ENCODE measurements at regions of chr20 and their contacts with region 1.

Region 1: GRCh38 chr20:38434743-38435554 is at the start of gene SNHG17:
- DNase-seq: peak; percentile 35 to 98
- ATAC-seq: peak; percentile 87 to 89
- H3K4me3 ChIP-seq: peak within 1 kb of the TSS; percentile 95
- H3K27ac ChIP-seq: peak within 1 kb of the TSS; percentile 97
- H3K4me1 ChIP-seq: peaks cover 15% of the 10 kb centered on the region; the same call in 2 of the 3 replicates
- CTCF ChIP-seq: peak; percentile 97
- EP300 ChIP-seq: no peak
- POLR2A ChIP-seq: peak; percentile 99
- RAD21 ChIP-seq: peak; percentile 34 to 47; a peak in 4 of 5 replicates
- polyA plus RNA-seq, gene SNHG17: 154 and 159 TPM in 2 replicates

Region 2: GRCh38 chr20:38278763-38279162 is 156.2 kb before region 1 on chr20:
- CTCF ChIA-PET with region 1: no interaction called
- POLR2A ChIA-PET with region 1: no interaction called
- DNase-seq: no peak
- ATAC-seq: no peak
- H3K4me3 ChIP-seq: no peak overlapping the region
- H3K27ac ChIP-seq: no peak overlapping the region
- H3K4me1 ChIP-seq: no peaks in the 10 kb centered on the region
- CTCF ChIP-seq: no peak
- EP300 ChIP-seq: no peak
- POLR2A ChIP-seq: no peak
- RAD21 ChIP-seq: no peak

Region 3: GRCh38 chr20:38304845-38305447 is 130.0 kb before region 1 on chr20:
- CTCF ChIA-PET with region 1: no interaction called
- POLR2A ChIA-PET with region 1: interaction called, 11 read pairs
- DNase-seq: peak; percentile 43 to 50
- ATAC-seq: peak; percentile 68 to 85; a peak in 4 of 6 replicates
- H3K4me3 ChIP-seq: no peak overlapping the region
- H3K27ac ChIP-seq: no peak overlapping the region
- H3K4me1 ChIP-seq: no peaks in the 10 kb centered on the region
- CTCF ChIP-seq: peak; percentile 39
- EP300 ChIP-seq: no peak
- POLR2A ChIP-seq: no peak
- RAD21 ChIP-seq: peak in 1 of 2 experiments; percentile 44; a peak in 4 of 5 replicates

Region 4: GRCh38 chr20:38337561-38338140 is 97.3 kb before region 1 on chr20:
- CTCF ChIA-PET with region 1: no interaction called
- POLR2A ChIA-PET with region 1: no interaction called
- DNase-seq: peak; percentile 58 to 84
- ATAC-seq: peak; percentile 63 to 95; a peak in 5 of 6 replicates
- H3K4me3 ChIP-seq: no peak overlapping the region
- H3K27ac ChIP-seq: no peak overlapping the region
- H3K4me1 ChIP-seq: no peaks in the 10 kb centered on the region
- CTCF ChIP-seq: peak; percentile 45
- EP300 ChIP-seq: no peak
- POLR2A ChIP-seq: no peak
- RAD21 ChIP-seq: peak; percentile 43 to 78

Region 5: DNA sequence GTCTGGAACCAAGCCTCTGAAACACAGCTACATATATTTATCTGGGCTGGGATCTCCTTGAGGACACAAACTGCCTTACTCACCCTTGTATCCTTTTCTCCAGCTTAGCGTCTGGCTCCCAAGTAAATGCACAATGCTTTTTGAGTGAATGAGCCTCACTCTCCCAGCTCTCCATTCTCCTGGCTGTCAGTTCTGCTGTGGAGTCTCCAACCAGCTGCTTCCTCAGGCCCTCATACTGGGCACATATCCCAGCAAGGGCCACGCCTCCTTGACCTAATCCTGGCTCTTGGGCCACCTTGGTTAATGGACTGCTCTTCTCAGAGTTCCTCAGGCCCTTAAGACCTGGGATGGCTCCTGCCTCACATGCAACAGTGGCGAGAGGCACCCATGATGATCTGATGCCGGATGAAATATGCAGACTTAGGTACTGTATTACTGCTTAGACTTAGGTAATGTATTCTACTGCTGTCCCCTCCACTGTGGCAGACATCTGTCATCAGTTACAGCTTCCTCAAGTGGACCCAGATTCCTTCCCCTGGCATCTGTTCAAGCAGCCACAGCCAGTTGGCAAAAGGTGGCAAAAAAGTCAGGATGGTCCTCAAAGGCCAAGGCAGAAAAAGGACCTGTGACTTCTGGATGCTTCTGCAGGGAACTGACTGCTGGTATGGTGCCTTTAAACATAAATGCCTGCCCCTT is 16.3 kb before region 1 on chr20:
- CTCF ChIA-PET with region 1: interaction called, 22 read pairs
- POLR2A ChIA-PET with region 1: interaction called, 3 read pairs
- DNase-seq: no peak
- ATAC-seq: peak; percentile 35 to 39
- H3K4me3 ChIP-seq: no peak overlapping the region
- H3K27ac ChIP-seq: no peak overlapping the region
- H3K4me1 ChIP-seq: no peaks in the 10 kb centered on the region
- CTCF ChIP-seq: no peak
- EP300 ChIP-seq: no peak
- POLR2A ChIP-seq: no peak
- RAD21 ChIP-seq: no peak

Region 6: DNA sequence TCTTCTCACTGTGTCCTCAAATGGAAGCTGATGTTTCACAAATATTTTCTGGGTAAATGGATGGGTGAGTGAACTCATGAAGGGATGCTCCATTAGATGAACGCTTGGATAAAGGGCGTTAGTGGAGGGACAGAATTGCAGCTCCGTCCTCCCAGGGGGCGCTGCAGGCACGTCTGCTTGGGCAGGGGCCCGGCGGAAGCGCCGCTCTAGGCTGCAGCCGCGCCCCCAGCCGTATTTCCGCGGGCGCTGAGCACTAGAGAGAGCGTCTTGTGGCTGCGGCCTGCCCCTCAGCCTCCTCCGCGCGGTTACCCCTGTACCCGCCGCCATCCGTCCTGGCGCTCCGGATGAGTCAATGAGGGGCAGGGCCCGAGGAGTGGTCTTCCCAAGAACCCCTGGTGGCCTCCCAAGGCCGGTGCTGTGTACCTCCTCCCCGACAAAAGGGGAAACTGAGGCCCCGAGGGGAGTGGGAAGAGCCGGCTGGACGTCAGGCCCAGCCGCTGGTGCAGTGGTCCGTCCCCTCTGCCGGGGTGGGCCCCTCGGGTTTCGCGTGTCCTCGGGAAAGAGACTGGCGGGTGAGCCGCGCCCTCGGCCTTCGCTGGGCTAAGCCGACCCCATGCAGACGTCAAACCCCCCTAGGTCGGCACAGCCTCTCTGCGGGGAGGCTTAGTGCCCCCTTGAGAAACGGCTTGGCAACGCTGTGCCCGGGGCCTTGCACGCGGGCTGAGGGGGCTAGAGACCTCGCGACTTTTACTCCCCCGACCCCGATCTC is 11.7 kb after region 1 on chr20:
- CTCF ChIA-PET with region 1: interaction called, 142 read pairs
- POLR2A ChIA-PET with region 1: interaction called, 75 read pairs
- DNase-seq: peak; percentile 72 to 95
- ATAC-seq: peak; percentile 93 to 96
- H3K4me3 ChIP-seq: peak overlapping the region; percentile 86
- H3K27ac ChIP-seq: peak overlapping the region; percentile 91 to 97
- H3K4me1 ChIP-seq: peaks cover 14% of the 10 kb centered on the region
- CTCF ChIP-seq: peak; percentile 94
- EP300 ChIP-seq: no peak
- POLR2A ChIP-seq: peak; percentile 88
- RAD21 ChIP-seq: peak; percentile 48 to 56; a peak in 4 of 5 replicates

Region 7: DNA sequence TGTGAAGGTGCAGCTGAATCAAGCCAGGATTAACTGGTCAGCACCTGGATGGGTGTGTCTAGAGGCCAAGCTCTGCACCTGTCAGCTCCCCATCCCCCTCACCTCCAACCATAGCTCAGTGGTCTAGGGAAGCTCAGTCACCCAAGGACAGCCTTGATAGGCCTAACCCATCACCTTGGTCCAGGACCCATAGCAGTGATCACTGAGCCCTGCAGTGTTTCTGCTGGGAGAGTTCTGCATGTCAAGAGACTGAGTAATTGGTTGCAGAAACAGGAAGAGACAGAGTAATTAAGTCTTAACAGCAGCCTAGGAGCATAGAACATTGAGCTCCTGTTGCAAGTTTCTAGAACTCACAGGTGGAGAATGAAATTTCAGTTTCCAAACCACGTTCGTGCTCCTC is 19.0 kb after region 1 on chr20:
- CTCF ChIA-PET with region 1: interaction called, 142 read pairs
- POLR2A ChIA-PET with region 1: interaction called, 3 read pairs
- DNase-seq: no peak
- ATAC-seq: no peak
- H3K4me3 ChIP-seq: no peak overlapping the region
- H3K27ac ChIP-seq: no peak overlapping the region
- H3K4me1 ChIP-seq: 0 out of 3 replicates have a peak, but pooled peaks cover 5% of the 10 kb centered on the region
- CTCF ChIP-seq: no peak
- EP300 ChIP-seq: no peak
- POLR2A ChIP-seq: no peak
- RAD21 ChIP-seq: no peak

Region 8: DNA sequence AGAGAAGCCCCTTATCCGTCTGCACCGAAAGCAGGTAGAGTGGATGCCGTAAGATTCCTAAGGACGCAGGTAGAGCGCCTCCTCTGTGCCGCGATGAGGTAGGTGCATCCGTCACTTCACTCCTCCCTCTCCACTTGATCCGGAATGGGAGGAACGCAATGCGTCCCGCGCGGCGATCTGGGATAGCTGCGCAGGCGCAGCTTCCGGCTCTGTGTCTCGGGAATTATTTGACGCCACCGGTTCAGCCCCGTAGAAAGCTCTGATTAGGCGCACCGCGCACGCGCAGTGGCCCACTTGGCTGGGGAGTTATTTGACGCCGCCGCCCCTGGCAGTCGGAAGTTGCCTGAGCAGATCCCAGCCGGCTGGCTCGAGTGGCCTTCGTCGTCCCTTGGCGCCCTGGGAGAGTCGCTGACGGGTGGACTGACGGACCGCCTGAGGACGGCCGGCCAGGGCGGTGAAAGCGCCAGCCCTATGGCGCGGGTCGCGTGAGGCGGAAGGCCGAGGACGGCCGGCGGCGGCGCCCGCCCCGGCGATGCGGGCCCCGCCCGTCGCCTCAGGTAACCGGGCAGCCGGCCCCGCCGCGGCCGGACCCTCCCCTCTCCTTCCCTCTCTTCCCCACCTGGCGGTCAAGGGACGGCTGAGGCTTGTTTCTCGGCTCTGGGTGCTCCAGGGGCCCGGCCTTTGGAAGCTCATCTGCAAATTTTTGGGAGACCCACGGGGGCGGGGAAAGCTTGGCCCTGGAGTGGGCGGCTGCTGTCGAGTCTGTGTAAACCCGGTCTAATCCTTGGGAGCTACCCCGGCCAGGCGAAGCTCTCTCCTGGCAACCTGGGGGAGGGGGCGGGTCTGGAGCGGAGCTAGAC is 37.8 kb after region 1 on chr20 and contains the start of gene RALGAPB:
- CTCF ChIA-PET with region 1: interaction called, 18 read pairs
- POLR2A ChIA-PET with region 1: interaction called, 30 read pairs
- DNase-seq: peak; percentile 96 to 99
- ATAC-seq: peak; percentile 96 to 98
- H3K4me3 ChIP-seq: peak within 1 kb of the TSS; percentile 89
- H3K27ac ChIP-seq: peak within 1 kb of the TSS; percentile 87 to 93
- H3K4me1 ChIP-seq: peaks cover 18% of the 10 kb centered on the region
- CTCF ChIP-seq: peak; percentile 52
- EP300 ChIP-seq: no peak
- POLR2A ChIP-seq: peak; percentile 52
- RAD21 ChIP-seq: peak; percentile 30 to 41; a peak in 4 of 5 replicates
- polyA plus RNA-seq, gene RALGAPB: 35.9 and 38.9 TPM in 2 replicates

Region 9: DNA sequence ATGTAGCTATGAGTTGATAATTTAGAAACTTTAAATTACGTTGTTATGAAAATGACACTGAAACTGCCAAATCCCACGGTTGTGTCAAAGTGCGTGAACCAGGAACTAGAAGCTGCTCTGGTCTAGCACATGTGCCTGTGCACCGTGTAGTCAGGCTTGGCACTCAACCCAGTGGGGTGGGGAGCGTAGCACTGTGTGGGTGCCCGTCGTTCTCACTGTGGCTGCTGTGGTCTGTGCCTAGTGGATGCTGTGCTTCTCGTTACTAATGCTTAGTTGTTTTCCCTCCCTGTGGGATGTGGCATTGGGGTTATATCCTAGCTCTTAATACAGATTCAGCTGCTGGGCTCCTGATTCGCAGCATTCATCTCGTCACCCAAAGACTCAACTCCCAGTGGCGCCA is 99.8 kb after region 1 on chr20:
- CTCF ChIA-PET with region 1: interaction called, 3 read pairs
- POLR2A ChIA-PET with region 1: interaction called, 10 read pairs
- DNase-seq: no peak
- ATAC-seq: no peak
- H3K4me3 ChIP-seq: no peak overlapping the region
- H3K27ac ChIP-seq: no peak overlapping the region
- H3K4me1 ChIP-seq: no peaks in the 10 kb centered on the region
- CTCF ChIP-seq: no peak
- EP300 ChIP-seq: no peak
- POLR2A ChIP-seq: no peak
- RAD21 ChIP-seq: no peak